ENCODE measurements at regions of chr2 and their contacts with region 1.

Region 1: GRCh38 chr2:21395366-21395765 is 271.6 kb downstream of the TDRD15 start:
- DNase-seq: peak in 6 of 10 donors; percentile 14 to 88 (median 24)

Region 2: GRCh38 chr2:21175895-21176646 is 219.3 kb before region 1 on chr2:
- intact Hi-C with region 1: loop called (anchors 5 kb)
- DNase-seq: no peak

Region 3: GRCh38 chr2:21291426-21291825 is 103.9 kb before region 1 on chr2:
- intact Hi-C with region 1: no loop called
- DNase-seq: no peak

Region 4: DNA sequence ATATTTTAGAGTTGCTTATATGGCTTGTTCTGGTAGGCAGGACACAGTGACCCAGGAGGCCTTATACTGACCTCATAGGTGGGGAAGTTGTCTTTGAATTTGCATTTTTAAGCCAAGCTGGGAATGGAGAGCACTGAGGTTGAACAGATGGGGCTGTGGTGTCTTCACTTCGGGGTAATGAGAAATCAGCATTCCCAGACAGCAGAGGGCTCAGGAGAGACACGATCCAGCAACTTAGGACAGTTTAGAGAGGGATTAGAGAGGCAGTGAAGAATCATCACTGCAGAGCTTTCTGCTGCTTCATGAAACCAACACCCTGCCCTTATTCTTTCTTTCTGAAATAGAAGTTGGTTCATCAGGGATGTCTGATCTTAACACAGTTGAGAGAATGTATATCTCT is 69.2 kb before region 1 on chr2:
- intact Hi-C with region 1: loop called (anchors 5 kb)
- DNase-seq: no peak

Measured in posterior cingulate gyrus (tissue), 11 donors.